ACHN (cell line): ENCODE measurements at regions of chr7 and their contacts with region 1.

Region 1: DNA sequence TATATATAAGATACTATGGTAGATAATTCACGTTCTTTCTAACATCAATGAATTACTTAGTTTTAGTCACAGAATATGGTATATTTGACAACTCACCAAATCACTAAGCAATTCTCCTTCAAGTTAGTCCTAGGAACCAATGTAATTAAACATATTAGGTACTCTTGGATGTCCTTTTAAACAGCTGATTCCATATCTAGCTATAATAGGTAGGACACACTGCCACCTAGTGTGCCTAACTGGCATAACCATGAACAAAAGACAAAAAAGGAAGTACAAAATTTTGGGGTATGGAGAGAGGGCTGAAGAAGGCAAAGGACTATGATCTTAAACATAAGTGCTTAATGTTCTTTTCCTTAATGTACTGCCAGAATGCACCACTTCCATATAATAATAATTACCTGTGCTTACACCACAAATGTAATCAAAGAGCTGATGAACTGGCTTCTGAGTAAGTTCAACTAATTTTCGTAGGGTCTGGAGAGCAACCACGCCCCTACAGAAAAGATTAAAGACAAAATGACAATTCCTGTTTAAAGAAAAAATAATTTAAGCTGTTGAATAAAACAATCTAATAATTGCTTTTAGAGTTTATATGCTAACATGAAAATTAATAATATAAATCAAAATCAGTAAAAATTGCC is 28.7 kb downstream of the PNPLA8 start:
- DNase-seq: peak; percentile 71

Region 2: GRCh38 chr7:107405561-107405960 is 1091.6 kb before region 1 on chr7:
- in situ Hi-C with region 1: no loop called
- DNase-seq: no peak

Region 3: GRCh38 chr7:108181073-108181985 is 315.9 kb before region 1 on chr7:
- in situ Hi-C with region 1: loop called (anchors 25 kb)
- DNase-seq: peak; percentile 72

Region 4: GRCh38 chr7:108294595-108294994 is 202.6 kb before region 1 on chr7:
- in situ Hi-C with region 1: no loop called
- DNase-seq: no peak